Kidney (tissue), 22 donors: ENCODE measurements at regions of chr5 and their contacts with region 1.

Region 1: GRCh38 chr5:127564002-127564769 is 46.7 kb downstream of the PRRC1 start:
- DNase-seq: peak in 3 of 5 donors; percentile 63 to 90 (median 89)
- H3K4me3 ChIP-seq: no peak overlapping the region
- H3K27ac ChIP-seq: no peak overlapping the region
- H3K4me1 ChIP-seq: no peaks in the 10 kb centered on the region
- H3K27me3 ChIP-seq: no peaks in the 10 kb centered on the region
- CTCF ChIP-seq: peak; percentile 68

Region 2: GRCh38 chr5:127410959-127411358 is 153.2 kb before region 1 on chr5:
- intact Hi-C with region 1: no loop called
- DNase-seq: no peak
- H3K4me3 ChIP-seq: no peak overlapping the region
- H3K27ac ChIP-seq: no peak overlapping the region
- H3K4me1 ChIP-seq: no peaks in the 10 kb centered on the region
- H3K27me3 ChIP-seq: no peaks in the 10 kb centered on the region
- CTCF ChIP-seq: no peak

Region 3: DNA sequence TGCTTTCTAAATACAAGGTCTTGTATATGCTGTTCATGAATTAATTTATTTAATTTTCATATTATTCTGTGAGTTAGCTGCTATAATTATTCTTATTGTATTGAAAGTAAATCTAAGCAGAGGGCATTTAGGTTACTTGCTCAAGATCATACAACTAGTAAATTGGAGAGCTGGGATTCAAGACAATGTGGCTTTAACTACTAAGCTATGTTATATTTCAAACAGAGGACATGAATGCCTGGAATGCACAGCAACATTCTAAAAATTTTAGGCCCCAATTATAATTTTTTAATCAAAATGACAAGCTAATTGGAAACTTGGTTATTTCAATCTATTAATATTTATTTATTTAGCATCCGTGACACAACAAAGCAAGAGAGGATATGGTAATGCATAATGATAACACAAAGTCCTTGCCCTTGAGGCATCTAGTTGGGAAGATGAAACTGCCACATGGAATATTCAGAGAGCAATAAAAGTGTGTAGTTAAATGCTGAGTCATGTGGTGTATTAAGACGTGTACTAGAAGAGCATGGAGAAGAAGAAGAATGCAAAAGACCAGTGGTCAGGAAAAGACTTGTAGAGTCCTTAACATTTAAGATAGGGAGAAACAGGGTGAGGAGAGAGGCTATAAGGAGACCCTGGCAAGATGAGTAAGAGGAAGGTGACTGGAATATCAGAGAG is 109.1 kb after region 1 on chr5:
- intact Hi-C with region 1: no loop called
- DNase-seq: no peak
- H3K4me3 ChIP-seq: no peak overlapping the region
- H3K27ac ChIP-seq: no peak overlapping the region
- H3K4me1 ChIP-seq: no peaks in the 10 kb centered on the region
- H3K27me3 ChIP-seq: no peaks in the 10 kb centered on the region
- CTCF ChIP-seq: no peak

Region 4: GRCh38 chr5:128201065-128201926 is 637.1 kb after region 1 on chr5:
- intact Hi-C with region 1: loop called (anchors 10 kb)
- DNase-seq: peak; percentile 86 to 89 (median 89)
- H3K4me3 ChIP-seq: peak overlapping the region in 2 of 3 donors; percentile 27 to 31
- H3K27ac ChIP-seq: no peak overlapping the region
- H3K4me1 ChIP-seq: peaks cover 0 to 4% (median 2%) of the 10 kb centered on the region in 3 donors
- H3K27me3 ChIP-seq: no peaks in the 10 kb centered on the region
- CTCF ChIP-seq: peak; percentile 89